GM10248 (cell line): ENCODE measurements at regions of chr4 and their contacts with region 1.

Region 1: DNA sequence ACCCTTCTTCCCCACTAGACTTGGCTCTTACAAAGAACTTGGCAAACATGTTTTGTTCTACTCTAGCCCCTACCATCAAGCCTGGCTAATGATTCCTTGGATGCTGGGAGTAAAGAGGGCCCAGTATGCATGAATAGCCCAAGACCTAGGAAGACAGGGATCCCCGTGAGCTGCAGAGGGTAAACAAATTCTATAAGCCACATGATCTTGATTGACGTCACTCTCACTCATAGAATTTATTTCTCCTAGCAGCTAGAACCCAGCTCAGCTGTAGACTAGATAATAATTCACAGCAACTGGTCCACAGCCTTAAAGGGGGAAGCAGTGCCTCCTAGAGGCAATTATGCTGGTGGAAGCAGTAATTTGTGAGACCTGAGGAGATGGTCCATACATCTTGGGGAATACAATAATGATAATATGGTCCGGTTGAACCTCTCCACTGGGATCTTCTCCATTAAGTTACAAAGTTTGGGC is 16.1 kb upstream of the USO1 start:
- DNase-seq: peak; percentile 39
- CTCF ChIP-seq: peak; percentile 54

Region 2: DNA sequence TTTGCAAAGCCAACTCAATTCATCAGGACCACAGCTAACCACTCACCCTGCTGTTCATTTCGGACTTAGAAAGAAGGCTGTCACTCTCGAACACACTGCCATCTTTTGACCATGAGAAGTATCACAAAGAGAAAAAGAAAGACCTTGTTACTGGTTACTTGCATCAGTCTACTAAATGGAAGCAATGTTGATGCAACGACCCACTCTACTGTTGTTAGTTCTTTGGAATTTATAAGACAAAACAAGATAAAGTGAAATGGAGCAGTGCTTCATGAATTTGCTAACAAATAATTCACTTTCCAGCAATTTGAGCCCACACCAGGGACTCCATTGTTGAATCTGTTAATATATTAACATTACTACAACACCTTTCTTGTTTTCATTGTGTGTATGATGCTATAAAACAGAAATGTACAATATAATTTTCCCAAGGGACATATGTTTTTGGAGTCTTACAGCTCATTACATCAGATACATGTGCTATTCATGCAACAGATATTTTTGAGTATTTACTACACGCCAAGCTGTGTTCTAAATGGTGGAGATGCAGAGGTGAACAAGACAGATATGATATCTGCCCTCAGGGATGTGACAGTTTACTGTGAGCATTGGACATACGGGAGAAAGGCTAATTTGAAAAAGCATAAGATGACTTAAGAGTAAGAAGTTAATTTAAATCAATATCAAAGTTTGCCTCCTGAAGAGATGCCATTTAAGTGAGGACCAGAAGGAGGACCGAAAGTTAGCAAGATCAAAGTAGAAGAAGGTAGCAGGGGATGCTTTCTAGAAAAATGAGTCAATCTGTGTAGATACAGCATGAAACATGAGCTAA is 1176.1 kb before region 1 on chr4:
- CTCF ChIA-PET with region 1: no interaction called
- POLR2A ChIA-PET with region 1: no interaction called
- DNase-seq: peak; percentile 10
- CTCF ChIP-seq: peak; percentile 28

Region 3: DNA sequence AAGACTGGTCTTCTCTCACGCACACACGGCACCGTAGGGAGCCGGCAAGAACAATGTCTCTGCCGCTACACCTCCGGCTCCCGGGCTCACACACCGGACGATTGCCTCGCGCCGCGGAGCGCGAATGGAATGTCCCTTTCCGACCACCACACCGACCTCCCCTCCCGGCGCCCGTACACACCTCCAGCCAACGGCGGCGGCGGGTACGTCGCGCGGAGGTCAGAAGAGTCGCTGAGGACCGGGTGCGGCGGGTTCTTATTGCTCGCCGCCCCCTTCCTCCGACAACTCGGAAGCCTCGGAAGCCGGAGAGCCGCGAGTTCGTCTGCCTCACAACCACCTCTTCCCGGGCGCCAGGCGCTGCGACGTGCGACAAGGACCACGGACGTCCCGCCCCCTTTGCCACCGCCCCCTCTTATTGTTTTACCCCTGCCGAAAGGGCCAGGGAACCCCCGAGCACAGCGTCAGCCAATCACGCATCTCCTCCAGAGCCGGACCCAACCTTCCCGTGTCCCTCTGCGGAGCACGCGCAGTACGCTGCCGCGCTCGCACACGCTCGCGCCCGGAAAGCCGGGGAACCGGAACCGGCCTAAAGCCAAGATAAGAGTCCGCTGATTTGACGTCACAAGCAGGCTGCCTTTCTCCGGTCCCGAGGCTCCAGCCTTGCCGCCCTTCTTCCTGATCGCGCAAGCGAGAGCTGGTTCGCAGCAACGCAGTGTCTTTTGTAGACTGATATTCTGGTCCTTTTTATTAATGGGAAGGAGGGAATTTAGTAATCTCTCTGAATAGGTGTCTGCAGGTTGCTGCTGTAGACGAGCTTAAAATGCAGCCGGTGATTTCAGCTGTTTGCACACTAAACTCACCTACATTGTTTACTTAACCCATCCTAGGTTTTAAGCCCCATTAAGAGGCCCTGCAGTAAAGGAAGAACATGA is 35.0 kb before region 1 on chr4 and contains the start of gene G3BP2:
- CTCF ChIA-PET with region 1: interaction called, 10 read pairs
- POLR2A ChIA-PET with region 1: no interaction called
- DNase-seq: peak; percentile 98
- CTCF ChIP-seq: no peak

Region 4: DNA sequence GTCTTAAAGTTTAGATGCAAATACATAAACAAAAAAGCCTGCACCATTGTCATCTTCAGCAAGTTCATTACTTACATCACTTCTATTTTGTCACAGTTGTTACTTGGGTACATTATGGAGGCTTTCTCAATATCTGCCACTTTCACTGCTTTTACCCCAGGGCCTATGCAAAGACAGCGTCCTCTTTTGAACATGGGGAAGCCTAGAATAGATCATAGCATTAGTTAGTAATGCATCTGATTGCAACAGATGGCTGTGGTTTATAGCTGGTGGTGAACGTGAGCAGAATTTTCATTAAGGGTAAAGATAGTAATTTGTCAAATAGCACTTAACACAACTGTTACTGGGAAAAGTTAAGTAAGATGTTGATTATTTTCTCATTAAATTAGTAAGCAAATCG is 326.9 kb after region 1 on chr4:
- CTCF ChIA-PET with region 1: no interaction called
- POLR2A ChIA-PET with region 1: no interaction called
- DNase-seq: no peak
- CTCF ChIP-seq: no peak